ENCODE measurements at regions of chr17 and their contacts with region 1.

Region 1: DNA sequence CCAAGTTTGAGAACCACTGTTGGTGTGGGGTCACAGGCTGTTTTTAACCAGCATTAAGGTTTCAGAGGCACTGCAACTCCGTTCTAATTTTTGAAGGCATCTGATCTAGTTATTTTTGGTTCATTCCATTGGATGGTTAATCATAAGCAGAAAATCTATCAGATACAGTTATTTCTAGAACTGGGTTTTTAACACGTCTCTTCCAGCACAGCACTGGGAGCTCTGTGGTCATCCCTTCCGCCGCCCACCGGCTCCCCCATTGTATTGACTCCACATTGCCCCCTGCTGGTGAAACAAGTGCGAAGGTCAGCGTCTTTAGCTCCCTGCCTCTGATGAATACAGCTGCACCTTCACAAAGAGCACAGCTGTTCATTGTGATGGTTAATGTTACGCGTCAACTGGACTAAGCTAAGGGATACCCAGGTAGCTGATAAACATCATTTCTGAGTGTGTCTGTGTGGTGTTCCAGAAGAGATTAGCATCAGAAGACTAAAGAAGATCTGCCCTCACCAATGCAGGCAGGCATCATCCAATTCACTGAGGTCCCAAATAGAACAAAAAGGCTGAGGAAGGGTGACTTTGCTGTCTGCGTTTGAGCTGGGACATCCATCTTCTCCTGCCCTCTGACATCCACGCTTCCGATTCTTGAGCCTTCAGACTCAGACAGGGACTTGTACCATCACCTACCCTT is 8.5 kb downstream of the CCL18 start:
- DNase-seq: peak; percentile 48
- H3K4me3 Mint-ChIP-seq: no peak overlapping the region
- H3K27ac Mint-ChIP-seq: peak overlapping the region; percentile 54
- H3K4me1 Mint-ChIP-seq: peaks cover 23% of the 10 kb centered on the region
- H3K27me3 Mint-ChIP-seq: peaks cover 4% of the 10 kb centered on the region

Region 2: DNA sequence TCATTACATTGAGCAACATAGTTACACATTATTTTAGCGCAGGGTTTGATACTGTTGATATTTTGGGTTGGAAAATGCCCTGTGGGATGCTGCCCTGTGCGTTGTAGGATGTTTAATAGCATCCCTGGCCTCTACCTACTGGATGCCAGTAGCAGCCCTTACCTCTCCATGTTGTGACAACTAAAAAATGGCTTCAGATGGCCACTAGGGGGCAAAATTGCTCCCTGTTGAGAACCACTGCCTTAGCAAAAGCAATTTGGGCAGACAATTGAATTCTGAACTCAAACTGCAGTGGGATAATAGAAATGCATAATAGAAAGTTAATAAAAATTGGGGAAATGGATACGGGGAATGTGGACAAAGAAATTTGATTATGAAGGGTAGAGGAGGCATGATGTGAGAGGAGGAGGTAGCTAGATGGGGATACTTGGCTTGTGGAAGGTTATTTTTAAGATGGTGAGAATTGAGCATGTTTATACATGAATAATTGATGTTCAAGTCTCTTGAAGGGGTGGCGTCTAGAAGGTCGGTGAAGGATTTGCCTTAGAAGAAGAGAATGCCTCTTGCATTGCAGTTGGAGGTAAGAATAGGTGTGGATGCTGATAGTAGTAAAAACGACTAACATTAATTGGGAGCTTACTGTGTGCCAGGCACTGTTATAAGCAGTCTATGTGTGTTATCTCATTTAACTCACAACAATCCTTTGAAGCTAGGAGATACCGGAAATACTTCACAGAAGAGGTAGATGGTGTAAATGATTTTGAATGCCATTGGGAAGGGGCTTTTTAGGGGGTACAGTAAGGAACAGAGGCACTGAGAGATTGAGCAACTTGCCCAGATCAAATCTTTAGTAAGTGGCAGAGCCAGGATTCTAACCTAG is 222.9 kb before region 1 on chr17:
- intact Hi-C with region 1: loop called (anchors 5 kb)
- DNase-seq: peak; percentile 49
- H3K4me3 Mint-ChIP-seq: no peak overlapping the region
- H3K27ac Mint-ChIP-seq: peak overlapping the region; percentile 42
- H3K4me1 Mint-ChIP-seq: peaks cover 19% of the 10 kb centered on the region
- H3K27me3 Mint-ChIP-seq: no peaks in the 10 kb centered on the region

Region 3: DNA sequence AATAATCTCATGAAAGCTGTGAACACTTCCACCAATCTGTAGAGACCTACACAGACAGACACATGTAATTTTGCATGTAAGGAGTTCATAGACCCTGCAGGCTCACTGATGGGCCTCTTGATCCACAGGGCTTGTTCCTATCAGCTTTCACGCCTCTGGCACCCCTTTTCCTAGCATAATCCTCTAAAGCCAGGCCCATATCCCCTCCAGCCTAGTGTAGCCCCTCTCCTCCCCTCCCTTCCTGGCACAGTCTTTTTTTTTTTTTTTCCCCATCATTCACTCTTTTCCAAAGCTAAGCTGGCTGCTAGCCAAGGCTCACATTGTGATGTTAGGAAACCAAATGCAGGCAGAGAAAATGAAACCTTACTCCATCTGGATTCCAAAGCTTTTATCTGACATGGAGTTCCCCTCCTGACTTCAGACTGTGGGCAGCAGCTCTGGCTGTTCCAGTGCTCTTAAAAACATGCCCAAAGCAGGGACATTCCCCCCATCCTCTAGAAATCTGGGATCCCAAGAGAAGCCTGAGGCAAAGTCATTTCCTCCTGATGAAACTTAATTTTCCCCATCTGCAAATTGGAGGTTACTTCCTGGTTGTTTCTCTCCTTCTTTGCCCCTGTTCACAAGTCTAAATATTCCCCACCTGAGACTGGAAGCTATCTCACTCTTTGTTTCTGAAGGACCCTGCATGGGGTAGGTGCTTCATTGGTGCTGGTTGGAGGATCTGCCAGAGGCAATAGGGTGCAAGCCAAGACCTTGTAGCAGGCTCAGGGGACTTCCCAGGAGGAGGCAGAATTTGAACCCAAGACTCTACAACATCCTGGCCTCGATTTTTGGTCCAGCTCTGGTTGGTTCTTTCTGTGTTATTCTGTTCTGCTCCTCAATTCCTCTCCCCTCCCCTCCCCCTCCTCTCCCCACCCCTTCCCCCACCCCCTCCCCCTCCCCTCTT is 182.5 kb before region 1 on chr17:
- intact Hi-C with region 1: loop called (anchors 5 kb)
- DNase-seq: no peak
- H3K4me3 Mint-ChIP-seq: peak overlapping the region; percentile 66
- H3K27ac Mint-ChIP-seq: peak overlapping the region; percentile 94
- H3K4me1 Mint-ChIP-seq: peaks cover 56% of the 10 kb centered on the region
- H3K27me3 Mint-ChIP-seq: no peaks in the 10 kb centered on the region

Region 4: GRCh38 chr17:36057911-36058310 is 14.7 kb before region 1 on chr17:
- intact Hi-C with region 1: no loop called
- DNase-seq: no peak
- H3K4me3 Mint-ChIP-seq: no peak overlapping the region
- H3K27ac Mint-ChIP-seq: no peak overlapping the region
- H3K4me1 Mint-ChIP-seq: no peaks in the 10 kb centered on the region
- H3K27me3 Mint-ChIP-seq: peaks cover 4% of the 10 kb centered on the region

Region 5: DNA sequence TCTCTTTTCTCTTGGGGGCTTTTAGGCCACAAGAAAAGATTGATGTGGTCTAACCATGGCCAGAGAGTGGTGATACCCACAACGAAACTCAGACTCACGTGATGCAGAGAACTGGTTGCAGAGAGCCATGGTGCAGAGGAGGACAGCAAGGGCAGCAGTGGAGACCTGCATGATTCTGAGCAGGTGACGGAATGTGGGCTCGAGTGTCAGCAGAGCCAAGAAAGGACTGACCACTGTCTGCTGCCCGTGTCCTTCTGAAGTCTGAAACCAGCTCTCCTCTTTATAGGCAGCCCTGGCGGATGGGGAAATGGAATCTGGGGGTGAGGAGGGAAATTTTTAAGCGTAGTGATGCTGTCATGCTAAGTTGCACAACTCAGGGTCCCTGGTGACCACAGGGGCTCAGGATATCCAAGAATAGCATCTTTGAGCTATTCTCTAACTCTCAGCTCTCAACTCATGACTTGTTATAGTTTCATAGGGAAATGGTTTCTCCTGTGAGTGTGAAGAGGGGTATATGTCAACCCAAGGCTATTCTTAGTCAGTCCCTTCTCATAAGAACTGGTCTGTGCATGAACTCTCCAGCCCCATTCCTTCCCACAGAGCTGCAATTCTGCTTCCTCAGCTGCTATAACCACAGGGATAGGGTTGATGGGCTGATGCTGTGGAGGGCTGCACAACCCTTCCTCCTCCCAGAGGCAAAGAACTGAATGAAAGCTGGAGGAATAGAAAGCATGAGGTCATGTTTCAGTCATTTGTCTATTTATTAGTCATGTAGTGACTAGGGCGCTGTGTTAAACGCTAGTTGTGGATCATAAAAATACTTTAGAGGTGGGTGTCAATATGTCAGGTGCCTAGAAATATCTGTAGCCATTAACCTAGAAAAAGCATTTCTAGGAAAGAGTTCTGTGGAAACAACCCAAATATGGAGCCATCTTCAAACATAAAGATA is 17.6 kb after region 1 on chr17 and contains the start of gene CCL3:
- intact Hi-C with region 1: loop called (anchors 1 kb)
- DNase-seq: no peak
- H3K4me3 Mint-ChIP-seq: peak within 1 kb of the TSS; percentile 68
- H3K27ac Mint-ChIP-seq: peak within 1 kb of the TSS; percentile 91
- H3K4me1 Mint-ChIP-seq: peaks cover 61% of the 10 kb centered on the region
- H3K27me3 Mint-ChIP-seq: peaks cover 10% of the 10 kb centered on the region
- total RNA-seq, gene CCL3: 1,244 and 1,261 TPM in 2 replicates

Region 6: GRCh38 chr17:36117505-36118382 is 45.2 kb after region 1 on chr17:
- intact Hi-C with region 1: loop called (anchors 1 kb)
- DNase-seq: no peak
- H3K4me3 Mint-ChIP-seq: no peak overlapping the region
- H3K27ac Mint-ChIP-seq: peak overlapping the region; percentile 56
- H3K4me1 Mint-ChIP-seq: peaks cover 16% of the 10 kb centered on the region
- H3K27me3 Mint-ChIP-seq: peaks cover 5% of the 10 kb centered on the region